Spleen (tissue), 13 donors: ENCODE measurements at regions of chr7 and their contacts with region 1.

Region 1: DNA sequence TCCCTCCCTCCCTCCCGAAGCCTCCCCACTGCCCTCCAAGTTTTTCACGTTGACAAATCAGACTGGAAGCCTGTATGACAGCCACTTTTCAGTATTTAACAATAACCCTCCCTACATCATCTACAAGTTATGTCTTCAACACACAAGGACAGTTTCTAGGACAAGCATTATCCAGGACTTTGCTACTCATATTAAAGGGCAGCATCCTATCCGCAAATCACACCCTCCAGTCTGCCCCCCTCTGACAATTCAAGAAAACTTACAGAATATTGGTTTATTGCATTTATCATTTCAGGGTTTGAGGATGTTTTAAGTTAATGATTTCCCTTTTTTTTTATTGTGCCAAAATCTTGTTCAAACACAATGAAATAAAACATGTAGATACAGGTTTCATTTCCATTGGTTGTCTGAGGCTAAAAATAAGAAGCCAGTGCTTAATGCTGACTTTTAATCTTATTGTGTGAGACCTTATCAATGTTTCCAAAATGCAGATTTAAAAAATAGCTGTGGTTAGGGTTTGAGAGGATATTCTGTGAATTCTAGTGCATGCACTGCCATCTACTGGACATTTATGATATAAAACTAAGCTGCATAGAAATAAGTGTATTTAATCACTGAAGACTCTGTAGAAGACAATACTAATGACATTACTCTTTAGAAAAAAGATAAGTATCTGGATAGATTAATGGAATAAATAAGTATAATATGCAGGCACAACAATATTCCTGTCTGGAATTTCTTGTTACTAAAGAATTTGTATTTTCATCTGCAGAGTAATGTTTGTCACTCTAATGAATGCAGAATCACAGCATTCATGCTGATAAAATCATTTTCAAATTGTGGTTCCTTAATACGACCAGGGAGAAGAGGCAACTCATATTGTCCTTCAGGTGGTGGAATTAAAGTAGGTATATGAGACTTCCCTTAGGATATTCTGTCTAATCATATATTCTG is 64.1 kb downstream of the CAV1 start:
- DNase-seq: no peak
- H3K4me3 ChIP-seq: no peak overlapping the region
- H3K27ac ChIP-seq: peak overlapping the region in 6 of 8 donors; percentile 13 to 71 (median 60)
- H3K4me1 ChIP-seq: peaks cover 11 to 63% (median 28%) of the 10 kb centered on the region in 6 donors
- H3K27me3 ChIP-seq: peaks cover 0 to 23% (median 0%) of the 10 kb centered on the region in 7 donors
- CTCF ChIP-seq: peak; percentile 34 to 76 (median 64)
- POLR2A ChIP-seq: no peak

Region 2: GRCh38 chr7:116173051-116174028 is 415.6 kb before region 1 on chr7:
- intact Hi-C with region 1: loop called (anchors 10 kb)
- DNase-seq: no peak
- H3K4me3 ChIP-seq: no peak overlapping the region
- H3K27ac ChIP-seq: no peak overlapping the region
- H3K4me1 ChIP-seq: no peaks in the 10 kb centered on the region
- H3K27me3 ChIP-seq: no peaks in the 10 kb centered on the region
- CTCF ChIP-seq: peak; percentile 25 to 62 (median 53)
- POLR2A ChIP-seq: no peak

Region 3: DNA sequence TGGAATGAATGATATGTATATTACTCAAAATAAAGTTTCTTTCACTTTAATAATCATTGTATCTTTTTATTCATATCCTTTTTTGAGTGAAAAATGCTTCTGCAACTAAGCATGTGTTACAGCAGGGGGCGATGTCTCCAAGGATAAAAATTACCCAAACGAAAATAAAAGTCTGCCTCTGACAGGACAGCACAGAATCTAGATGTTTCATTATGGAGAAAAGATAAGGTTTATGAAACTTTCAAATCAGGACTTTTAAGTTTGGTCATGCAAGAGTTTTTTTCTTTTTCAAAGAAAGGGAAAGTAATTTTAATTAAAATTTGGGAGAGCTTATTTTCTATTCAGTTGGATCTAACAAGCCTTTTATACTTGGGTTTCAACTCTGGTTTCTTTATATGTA is 330.2 kb before region 1 on chr7:
- intact Hi-C with region 1: loop called (anchors 2 kb)
- DNase-seq: no peak
- H3K4me3 ChIP-seq: no peak overlapping the region
- H3K27ac ChIP-seq: peak overlapping the region in 5 of 8 donors; percentile 12 to 48 (median 20)
- H3K4me1 ChIP-seq: peaks cover 0 to 11% (median 8%) of the 10 kb centered on the region in 6 donors
- H3K27me3 ChIP-seq: no peaks in the 10 kb centered on the region
- CTCF ChIP-seq: peak; percentile 50 to 86 (median 75)
- POLR2A ChIP-seq: no peak

Region 4: DNA sequence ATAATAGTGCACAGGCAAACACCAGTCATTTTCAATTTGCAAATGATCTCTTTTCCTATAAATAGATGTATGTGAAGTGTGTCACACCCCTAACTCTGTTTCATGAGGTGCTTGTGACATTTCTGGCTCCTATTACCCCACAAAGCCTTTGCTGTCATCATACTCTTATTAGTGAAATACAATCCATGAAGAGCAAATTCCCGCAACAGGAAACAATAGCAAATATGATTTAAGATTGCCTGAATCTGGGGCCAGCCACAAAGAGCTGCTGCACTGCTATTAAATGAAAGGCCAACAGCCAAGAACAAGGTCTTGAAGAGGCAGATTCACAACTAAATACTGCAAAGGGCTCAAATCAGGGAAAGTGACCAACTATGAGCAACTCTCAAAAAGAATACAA is 185.7 kb before region 1 on chr7:
- intact Hi-C with region 1: no loop called
- DNase-seq: no peak
- H3K4me3 ChIP-seq: no peak overlapping the region
- H3K27ac ChIP-seq: no peak overlapping the region
- H3K4me1 ChIP-seq: no peaks in the 10 kb centered on the region
- H3K27me3 ChIP-seq: peaks cover 0 to 4% (median 0%) of the 10 kb centered on the region in 7 donors
- CTCF ChIP-seq: no peak
- POLR2A ChIP-seq: no peak

Region 5: DNA sequence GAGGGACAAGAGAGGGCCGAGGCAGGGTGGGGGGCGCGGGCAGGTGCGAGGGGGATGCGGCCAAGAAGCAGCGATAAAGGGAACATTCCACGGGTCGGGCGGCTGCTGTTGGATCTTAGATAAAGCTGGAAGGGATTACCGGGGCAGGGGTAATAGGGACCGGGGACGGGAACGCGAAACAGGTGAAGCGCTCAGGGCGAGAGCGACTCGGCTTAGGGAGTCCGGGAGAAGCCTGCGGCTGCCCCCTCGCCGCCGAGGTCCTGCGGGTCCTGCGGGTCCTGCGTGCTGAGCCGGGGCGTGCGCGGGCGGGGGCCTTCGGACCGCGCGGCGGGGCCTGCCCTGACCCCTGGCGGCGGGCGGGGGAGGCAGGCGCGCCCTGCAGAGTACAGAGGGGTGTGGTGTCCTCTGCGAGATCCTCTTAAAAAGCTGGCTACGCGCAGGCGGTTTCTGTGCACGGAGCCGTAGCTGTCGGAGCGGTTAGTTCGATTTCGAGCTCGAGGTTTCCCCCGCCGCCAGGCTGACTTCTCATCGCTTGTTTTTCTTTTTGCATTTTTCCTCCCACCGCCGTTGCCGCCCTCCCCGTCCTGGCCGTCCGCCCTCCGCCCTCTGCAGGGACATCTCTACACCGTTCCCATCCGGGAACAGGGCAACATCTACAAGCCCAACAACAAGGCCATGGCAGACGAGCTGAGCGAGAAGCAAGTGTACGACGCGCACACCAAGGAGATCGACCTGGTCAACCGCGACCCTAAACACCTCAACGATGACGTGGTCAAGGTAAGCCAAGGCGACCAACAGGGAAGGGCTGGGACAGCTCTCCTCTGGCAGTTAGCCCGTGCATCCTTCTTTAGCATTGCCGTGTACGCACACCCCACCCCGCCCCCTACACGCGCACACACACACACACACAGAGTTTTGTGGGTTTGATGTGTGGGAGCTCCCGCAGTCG is 62.7 kb before region 1 on chr7:
- intact Hi-C with region 1: loop called (anchors 10 kb)
- DNase-seq: peak; percentile 93
- H3K4me3 ChIP-seq: peak overlapping the region; percentile 38 to 81 (median 58)
- H3K27ac ChIP-seq: peak overlapping the region; percentile 59 to 91 (median 88)
- H3K4me1 ChIP-seq: peaks cover 5 to 67% (median 42%) of the 10 kb centered on the region in 6 donors
- H3K27me3 ChIP-seq: peaks cover 0 to 46% (median 22%) of the 10 kb centered on the region in 7 donors
- CTCF ChIP-seq: peak in 10 of 11 experiments; percentile 19 to 94 (median 86)
- POLR2A ChIP-seq: peak in 1 of 3 donors; percentile 66

Region 6: GRCh38 chr7:116809636-116810266 is 220.8 kb after region 1 on chr7:
- intact Hi-C with region 1: loop called (anchors 2 kb)
- DNase-seq: no peak
- H3K4me3 ChIP-seq: no peak overlapping the region
- H3K27ac ChIP-seq: no peak overlapping the region
- H3K4me1 ChIP-seq: no peaks in the 10 kb centered on the region
- H3K27me3 ChIP-seq: no peaks in the 10 kb centered on the region
- CTCF ChIP-seq: peak in 9 of 11 experiments; percentile 37 to 67 (median 55)
- POLR2A ChIP-seq: no peak